Cardiac septum (tissue), 1 donor: ENCODE measurements at regions of chr16 and their contacts with region 1.

Region 1: GRCh38 chr16:53130159-53131049 is 75.6 kb downstream of the CHD9 start:
- DNase-seq: peak; percentile 97

Region 2: DNA sequence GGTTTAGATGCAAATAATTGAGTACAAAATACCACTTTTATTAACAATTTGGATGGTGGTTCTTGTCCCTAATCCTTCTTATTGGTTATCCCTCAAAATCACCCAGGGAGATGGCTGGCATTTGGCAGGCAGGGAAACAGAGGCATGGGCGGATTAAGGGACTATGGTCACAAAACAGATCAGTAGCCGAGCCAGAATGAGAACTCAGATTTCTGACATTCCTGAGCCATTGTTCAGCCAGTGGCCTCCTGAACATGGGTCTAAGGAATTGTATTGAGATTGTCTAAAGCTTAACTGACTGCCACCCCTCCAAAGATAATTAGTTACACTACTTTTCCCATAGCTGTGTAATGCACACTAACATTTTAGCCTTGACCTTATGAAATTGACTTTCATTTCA is 166.1 kb before region 1 on chr16:
- intact Hi-C with region 1: no loop called
- DNase-seq: no peak

Region 3: DNA sequence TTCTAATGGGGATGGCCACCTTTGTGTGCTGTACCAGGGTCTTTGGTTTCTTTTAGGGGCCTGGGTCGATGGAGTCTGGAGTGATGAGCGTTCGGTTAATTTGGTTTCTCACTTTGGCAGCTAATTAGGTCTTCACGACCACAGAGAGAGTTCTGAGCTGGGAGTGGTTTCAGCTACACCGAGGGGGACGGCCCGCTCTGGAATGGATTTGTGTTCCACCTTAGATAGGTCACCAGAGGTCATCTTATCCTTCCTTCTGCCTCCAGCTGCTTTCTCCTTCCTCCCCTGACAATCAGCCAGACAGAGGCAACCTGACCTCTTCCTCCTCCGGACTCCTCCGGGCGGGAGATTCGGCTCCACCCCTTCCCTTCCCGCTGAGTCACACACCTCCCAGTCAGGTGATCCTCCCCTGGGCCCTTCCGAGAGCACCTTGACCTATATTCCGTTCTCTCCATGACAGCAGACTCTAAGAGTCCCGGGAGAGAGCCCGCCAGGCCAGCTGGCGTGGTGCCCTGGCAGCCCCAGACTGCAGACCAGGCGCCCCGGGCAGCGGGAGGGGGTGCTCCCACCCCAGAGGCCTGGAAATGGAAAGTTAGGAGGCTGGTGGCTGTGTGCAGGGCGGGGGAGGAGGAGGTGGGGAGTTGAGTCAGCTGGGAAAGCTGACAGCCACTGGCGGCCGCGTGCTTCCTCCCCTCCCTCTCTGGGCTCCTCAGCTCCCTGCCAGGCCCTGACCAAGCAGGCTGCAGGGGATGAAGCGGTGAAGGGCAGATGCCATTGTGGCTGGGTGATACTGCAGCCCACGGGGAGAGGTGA is 30.9 kb before region 1 on chr16:
- intact Hi-C with region 1: loop called (anchors 1 kb)
- DNase-seq: peak; percentile 95

Region 4: DNA sequence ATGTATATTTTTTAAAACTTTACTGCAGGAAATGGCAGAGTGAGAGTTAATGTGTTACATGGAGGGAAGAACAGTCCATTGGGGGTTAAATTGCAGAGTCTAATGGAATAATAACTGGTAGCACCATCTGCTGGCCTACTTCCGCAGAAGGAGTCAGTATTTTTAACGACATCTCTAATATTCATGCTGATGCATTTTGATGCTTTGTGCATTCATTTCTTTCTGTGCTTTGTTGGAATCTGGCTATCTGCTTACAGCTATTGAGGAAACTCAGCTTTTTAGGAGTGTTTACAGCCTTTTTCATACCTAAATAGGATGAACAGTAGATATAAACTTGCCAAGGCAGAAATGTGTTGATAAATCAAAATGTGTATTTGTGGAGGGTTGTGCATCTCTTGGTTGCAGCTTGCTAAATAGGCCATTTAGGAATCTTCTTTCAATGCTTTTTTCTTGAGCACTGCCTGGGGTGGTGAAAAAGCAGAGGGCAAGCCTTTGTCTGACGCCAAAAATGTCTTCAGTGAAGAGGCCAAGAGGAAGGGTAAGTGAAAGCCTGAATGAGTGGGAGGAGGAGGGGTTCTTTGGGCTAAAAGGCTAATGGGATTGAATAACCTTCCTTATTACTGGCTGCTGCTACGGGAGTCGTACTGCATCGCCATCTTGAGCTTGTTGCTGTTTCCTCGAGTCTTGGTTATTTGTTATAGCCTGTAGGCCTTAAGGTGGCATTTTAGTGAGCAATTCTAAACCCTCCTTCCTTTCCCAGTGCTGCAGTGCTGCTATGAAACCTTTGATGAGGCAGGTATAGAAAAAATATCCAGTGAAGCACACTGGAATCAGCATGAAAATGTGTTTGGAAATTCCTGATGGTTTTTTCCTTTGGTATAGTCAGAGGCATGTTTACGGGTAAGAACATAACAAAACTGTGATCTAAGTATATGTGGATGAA is 77.7 kb after region 1 on chr16:
- intact Hi-C with region 1: loop called (anchors 2 kb)
- DNase-seq: no peak

Region 5: DNA sequence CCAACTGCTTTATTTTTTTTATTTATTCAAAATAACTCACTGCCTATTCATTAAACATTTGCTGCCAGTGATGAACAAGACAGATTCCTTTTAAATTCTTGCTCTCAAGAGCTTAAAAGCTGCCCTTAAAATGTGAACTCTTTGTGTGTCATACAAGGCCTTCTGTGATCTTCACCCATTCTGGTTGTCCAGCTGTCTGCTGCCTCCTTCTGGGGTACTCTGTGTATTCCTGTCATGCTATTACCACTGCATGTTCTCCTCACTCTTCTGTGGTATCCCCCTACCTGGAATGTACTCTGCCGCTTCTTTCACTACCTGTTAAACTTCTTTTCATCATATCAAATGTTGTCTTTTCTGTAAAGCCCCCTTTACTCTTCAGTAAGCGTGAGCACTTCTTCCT is 90.2 kb after region 1 on chr16:
- intact Hi-C with region 1: loop called (anchors 2 kb)
- DNase-seq: no peak